GM18951 (cell line): ENCODE measurements at regions of chr3 and their contacts with region 1.

Region 1: GRCh38 chr3:186849374-186849975 is 7.0 kb downstream of the ADIPOQ start:
- POLR2A ChIP-seq: no peak

Region 2: DNA sequence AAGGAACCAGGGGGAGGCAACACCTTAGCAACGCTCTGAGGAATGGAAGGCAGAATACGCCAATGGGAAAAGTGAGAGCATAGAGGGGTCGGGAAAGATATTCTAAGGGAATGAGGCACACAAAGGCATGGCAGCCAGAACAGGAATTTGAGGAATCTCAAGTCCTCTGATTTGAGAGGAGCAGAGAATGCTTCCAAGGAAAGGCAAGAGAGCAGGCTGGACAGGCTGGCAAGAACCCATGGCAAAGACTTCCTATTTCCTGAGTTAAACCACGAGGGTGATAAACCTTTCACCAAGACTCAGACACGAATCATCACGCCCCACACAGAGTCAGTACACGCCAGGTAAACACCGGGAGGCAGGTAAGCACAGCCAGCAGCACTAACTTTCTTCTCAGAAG is 1134.4 kb before region 1 on chr3:
- in situ Hi-C with region 1: no loop called
- POLR2A ChIP-seq: no peak

Region 3: GRCh38 chr3:186079925-186080324 is 769.5 kb before region 1 on chr3:
- in situ Hi-C with region 1: no loop called
- POLR2A ChIP-seq: no peak

Region 4: DNA sequence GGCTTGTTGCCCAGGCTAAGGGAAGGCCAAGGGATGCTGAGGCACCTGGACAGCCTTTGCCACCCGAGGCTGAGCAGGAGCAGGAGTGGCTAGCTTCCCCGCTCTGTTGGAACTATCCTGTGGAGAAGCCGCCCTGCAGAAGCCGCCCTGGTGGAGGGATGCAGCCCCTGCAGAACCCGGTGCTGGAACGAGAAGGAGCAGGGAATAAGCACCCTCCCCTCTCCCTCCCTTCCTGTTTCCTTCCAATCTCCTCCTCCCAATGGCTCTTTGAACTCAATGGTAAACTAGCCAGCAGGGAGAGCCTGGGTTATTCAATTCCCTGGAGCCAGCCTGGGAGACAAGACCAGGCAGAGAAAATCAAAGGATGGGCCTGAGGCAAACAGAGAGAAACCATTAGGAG is 195.5 kb before region 1 on chr3:
- in situ Hi-C with region 1: no loop called
- POLR2A ChIP-seq: no peak

Region 5: DNA sequence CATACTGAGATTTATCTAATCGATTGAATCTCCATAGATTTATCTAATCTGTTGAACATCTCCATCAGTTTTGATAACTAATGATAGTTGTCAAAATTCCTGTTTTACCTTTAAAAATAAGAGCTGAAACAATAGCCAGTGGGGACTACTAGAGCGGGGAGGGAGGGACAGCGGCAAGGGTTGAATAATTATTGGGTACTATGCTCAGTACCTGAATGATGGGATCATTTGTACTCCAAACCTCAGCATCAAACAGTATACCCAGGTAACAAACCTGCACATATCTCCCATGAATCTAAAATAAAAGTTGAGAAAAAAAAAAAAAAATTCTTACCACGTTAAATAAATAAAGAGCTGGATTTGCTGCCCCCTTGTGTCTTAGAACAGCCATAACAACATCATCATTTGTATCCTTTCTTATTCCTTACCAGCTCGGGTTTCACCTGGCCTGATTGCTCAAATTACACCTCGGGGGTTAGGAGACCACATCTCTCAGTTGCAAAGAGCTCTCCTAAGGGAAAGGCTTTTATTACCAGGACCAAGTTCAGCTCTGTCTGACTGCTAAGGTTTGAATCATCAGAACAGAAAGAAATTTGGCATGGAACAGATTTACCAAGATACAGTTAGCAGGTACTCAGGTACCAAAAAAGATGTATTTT is 315.5 kb after region 1 on chr3:
- in situ Hi-C with region 1: loop called (anchors 5 kb)
- POLR2A ChIP-seq: no peak